MCF 10A (cell line): ENCODE measurements at regions of chr9 and their contacts with region 1.

Region 1: DNA sequence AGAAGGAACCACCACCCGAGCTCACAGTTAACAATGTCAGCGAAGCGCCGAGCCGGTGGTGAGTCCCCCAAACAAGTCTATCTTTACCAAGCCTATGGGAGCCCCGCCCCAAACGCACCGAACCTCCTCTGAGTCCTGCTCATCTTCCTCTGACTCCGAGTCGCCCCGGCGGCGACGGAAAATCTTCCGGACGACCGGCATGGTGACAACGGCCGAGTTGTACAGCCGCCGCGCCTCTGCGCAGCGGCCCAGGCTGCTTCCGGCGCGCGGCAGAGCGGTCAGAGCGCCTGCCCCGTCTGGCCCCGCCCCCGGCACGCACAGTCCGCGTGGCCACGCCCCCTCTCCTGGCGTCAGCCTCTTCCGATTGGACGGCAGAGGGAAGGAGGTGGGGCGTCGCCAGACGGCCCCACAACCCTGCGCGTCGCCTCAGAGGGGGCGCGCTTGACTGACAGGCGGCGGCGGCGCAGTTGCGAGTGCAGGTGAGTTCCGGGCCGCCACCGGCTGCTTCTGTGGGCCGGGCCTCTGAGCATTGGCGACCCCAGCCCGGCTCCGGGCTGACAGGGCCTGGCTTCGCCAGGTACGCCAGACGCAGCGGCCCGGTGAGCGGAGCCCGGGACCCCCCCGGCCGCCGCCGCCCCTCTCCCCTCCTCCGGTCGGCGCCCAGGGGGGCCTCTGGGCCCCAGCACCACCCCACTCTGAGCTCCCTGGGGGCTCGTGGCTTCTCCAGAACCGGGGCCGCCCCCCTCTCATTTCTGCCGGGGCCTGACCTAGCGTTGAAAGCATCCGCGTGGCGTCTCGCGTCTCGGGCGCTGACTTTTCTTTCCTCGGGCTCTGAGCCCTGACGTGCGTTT is at the starts of genes C9orf78 and USP20:
- DNase-seq: peak; percentile 97
- H3K4me3 Mint-ChIP-seq: peak within 1 kb of the TSS; percentile 97
- H3K27ac Mint-ChIP-seq: peak within 1 kb of the TSS; percentile 98
- H3K4me1 Mint-ChIP-seq: peaks cover 26% of the 10 kb centered on the region
- H3K27me3 Mint-ChIP-seq: no peaks in the 10 kb centered on the region
- CTCF ChIP-seq: no peak
- total RNA-seq, gene C9orf78: 27.6 and 30.0 TPM in 2 replicates
- total RNA-seq, gene USP20: 14.7 and 17.1 TPM in 2 replicates

Region 2: DNA sequence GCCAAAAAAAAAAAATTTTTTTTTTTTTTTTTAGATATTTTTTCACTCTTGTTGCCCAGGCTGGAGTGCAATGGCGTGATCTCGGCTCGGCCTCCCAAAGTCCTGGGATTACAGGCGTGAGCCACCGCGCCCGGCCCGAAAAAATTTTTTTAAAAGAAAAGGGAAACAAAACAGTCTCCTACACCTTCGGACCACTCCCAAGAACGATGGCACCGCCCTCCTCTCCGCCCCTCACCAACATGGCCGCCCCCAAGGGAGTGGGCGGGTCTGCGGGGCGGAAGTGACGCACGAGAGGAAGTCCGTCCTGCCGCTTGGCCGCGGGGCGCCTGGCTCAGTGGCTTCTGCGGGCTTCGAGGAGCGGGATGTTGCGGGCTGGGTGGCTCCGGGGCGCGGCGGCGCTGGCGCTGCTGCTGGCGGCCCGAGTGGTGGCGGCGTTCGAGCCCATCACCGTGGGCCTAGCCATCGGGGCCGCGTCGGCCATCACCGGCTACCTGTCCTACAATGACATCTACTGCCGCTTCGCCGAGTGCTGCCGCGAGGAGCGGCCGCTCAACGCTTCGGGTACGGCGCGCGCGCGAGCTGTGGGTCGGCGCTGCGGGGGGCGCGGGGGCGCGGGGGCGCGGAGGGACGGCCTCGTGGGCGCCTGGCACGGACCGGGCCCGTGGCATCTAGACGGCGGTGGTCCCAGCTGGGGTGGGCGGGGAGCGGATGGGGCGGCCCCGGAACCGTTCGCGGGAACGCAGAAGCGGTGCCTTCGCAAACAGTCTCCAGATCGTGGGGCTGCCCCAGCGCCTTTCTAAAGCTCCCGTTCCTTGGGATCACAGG is 32.2 kb before region 1 on chr9 and contains the start of gene TOR1B:
- CTCF ChIA-PET with region 1: no interaction called
- POLR2A ChIA-PET with region 1: interaction called, 16 read pairs
- intact Hi-C with region 1: no loop called
- DNase-seq: peak; percentile 89
- H3K4me3 Mint-ChIP-seq: peak within 1 kb of the TSS; percentile 82
- H3K27ac Mint-ChIP-seq: peak within 1 kb of the TSS; percentile 90
- H3K4me1 Mint-ChIP-seq: no peaks in the 10 kb centered on the region
- H3K27me3 Mint-ChIP-seq: no peaks in the 10 kb centered on the region
- CTCF ChIP-seq: no peak
- total RNA-seq, gene TOR1B: 14.7 and 14.8 TPM in 2 replicates

Region 3: DNA sequence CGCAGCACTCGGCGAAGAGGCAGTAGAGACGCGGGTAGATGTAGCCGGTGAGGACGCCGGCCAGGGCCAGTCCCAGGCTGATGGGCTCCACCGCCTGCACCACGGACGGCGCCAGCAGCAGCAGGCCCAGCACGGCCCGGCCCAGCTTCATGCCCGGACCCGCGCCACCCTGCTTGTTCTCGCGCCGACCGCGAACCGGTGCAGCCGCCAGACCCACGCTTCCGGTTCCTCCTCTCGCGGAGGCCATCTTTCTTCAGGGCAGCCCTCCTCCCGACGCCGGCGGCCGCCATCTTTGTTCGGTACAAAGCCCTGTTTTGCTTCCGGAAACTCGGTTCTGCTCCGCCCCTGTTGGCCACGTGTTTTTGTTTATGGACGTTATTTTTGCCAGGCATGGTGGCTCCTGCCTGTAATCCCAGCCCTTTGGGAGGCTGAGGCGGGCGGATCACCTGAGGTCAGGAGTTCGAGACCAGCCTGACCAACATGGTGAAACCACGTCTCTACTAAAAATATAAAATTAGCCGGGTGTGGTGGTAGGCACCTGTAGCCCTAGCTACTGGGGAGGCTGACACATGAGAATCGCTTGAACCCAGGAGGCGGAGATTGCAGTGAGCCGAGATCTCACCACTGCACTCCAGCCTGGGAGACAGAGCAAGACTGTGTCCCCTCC is 11.2 kb before region 1 on chr9 and contains the start of gene TOR1A:
- CTCF ChIA-PET with region 1: interaction called, 4 read pairs
- POLR2A ChIA-PET with region 1: interaction called, 32 read pairs
- intact Hi-C with region 1: no loop called
- DNase-seq: peak; percentile 94
- H3K4me3 Mint-ChIP-seq: peak within 1 kb of the TSS; percentile 76
- H3K27ac Mint-ChIP-seq: peak within 1 kb of the TSS; percentile 77
- H3K4me1 Mint-ChIP-seq: no peaks in the 10 kb centered on the region
- H3K27me3 Mint-ChIP-seq: no peaks in the 10 kb centered on the region
- CTCF ChIP-seq: no peak
- total RNA-seq, gene TOR1A: 33.6 and 40.4 TPM in 2 replicates